ENCODE measurements at regions of chr5 and their contacts with region 1.

Region 1: GRCh38 chr5:159178978-159179377 is 30.4 kb downstream of the RNF145 start:
- DNase-seq: no peak
- H3K4me3 Mint-ChIP-seq: peak overlapping the region; percentile 68
- H3K27ac Mint-ChIP-seq: peak overlapping the region; percentile 94
- H3K4me1 Mint-ChIP-seq: peaks cover 60% of the 10 kb centered on the region
- H3K27me3 Mint-ChIP-seq: no peaks in the 10 kb centered on the region

Region 2: DNA sequence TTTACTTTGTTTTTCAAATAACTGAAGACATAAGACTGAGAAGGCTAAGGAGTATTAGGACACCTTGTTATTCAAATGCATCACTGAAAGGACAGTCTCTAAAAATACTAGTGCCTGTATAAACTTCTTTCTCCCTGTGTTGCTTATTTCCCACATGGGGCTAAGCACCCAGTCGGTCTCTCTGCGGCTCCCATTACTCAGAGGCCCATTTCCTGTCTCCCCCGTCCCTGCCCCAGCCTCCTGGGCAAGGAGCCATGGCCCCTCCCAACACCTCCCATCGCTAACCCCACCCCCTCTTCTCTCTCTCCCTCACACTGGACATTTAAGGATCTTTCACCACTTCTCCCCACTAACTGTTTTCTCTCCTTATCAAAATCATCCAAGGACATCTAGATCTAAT is 161.2 kb before region 1 on chr5:
- intact Hi-C with region 1: no loop called
- DNase-seq: no peak
- H3K4me3 Mint-ChIP-seq: no peak overlapping the region
- H3K27ac Mint-ChIP-seq: no peak overlapping the region
- H3K4me1 Mint-ChIP-seq: peaks cover 2% of the 10 kb centered on the region
- H3K27me3 Mint-ChIP-seq: peaks cover 3% of the 10 kb centered on the region

Region 3: DNA sequence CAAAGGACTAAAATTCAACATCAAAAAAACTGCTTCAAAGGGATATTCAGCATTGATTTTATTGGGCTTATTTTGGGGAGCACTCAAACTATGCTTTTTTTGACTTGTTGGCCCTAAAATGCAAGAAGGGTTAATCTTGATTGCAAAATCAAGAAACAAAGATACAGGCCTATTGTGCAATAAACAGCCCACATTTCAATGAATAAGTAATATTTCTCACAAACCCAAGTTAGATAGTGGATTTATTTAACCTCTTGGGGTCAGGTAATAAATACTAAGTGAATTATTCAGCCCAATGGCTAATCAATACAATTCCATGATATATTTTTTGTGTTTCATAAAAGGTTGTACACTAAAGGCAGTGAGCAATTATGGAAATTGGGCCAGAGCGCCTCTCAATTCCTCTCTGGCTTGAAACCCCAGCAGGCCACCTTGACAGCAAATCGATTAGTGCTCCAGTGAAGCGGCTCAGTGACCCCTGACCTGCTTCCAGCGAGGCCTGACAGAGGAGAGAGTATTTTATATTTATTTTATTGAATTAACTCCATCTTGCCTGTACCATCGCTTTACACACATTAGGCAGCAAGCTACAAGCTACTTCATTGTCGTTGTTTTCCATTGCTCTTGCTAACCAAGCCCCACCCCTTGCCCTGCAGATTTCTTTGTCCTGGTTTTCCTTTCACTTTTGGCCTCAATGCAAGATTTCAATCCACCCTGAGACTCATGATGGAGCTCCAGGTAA is 144.7 kb before region 1 on chr5:
- intact Hi-C with region 1: no loop called
- DNase-seq: no peak
- H3K4me3 Mint-ChIP-seq: no peak overlapping the region
- H3K27ac Mint-ChIP-seq: no peak overlapping the region
- H3K4me1 Mint-ChIP-seq: no peaks in the 10 kb centered on the region
- H3K27me3 Mint-ChIP-seq: peaks cover 14% of the 10 kb centered on the region

Region 4: DNA sequence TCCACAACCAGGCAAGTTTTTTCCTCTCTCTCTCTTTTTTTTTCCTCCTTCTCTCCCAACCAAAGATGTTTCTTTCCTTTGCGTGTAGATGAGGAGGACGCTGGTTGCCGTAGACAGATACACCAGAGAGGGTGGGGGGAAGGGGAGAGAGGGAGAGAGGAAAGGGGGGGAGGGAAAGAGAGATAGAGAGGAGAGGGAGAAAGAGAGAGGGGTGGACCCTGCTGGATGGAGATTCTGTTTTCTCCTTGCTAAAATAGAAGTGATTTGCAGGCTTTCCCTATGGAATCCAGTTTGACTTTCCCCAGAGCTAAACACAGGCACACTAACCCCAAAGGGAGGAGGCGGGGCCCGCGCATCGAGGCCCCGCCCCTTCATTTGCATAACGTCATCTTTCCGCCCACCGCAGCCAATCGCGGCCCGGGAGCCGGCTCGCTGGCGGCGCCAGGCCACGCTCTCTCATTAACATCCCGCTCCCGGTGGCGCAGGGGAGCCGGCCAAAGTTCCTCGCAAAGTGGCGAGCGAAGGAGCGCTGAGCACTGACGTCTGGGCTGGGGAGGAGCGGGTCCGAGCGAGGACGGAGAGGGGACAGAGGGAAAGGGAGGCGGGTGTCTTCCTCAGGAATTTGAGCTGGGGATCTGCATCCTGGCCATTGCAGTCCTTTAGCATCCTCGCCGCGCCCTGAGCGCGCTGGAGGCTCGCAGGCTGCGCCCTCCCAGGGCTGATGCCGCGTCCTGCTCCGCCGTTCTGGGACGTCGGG is 78.8 kb before region 1 on chr5:
- intact Hi-C with region 1: no loop called
- DNase-seq: peak; percentile 96
- H3K4me3 Mint-ChIP-seq: peak overlapping the region; percentile 85
- H3K27ac Mint-ChIP-seq: peak overlapping the region; percentile 64
- H3K4me1 Mint-ChIP-seq: peaks cover 34% of the 10 kb centered on the region
- H3K27me3 Mint-ChIP-seq: peaks cover 83% of the 10 kb centered on the region

Region 5: DNA sequence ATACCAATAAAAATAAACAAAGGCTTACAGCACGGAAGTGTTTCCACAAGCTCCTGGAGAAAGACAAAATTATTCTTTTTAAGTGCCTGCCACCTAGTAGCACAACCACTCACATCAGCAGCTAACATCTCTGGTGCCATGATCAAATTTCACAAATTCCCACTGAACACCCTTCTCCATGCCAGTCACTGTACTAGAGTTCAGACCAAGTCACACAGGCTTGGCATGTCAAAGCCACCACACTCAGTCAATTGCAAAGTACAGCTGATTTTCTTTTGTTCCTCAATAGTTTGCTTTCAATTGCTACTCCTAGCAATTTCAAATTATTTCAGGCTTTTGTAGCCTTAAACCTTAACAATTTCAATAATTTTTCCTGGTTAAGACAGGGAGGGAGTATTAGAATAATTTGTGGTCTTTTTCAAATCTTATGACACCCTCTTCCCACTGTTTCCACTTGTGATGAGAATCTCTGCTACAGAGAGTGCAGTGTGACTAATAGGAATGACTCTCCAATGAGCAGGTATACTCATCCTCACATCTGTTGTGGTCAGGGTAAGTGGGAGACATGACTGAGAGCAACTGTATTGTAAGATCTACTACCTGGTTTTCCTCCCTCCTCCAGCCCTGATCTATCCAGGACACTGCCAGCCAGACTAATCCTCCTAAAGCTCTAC is 15.8 kb before region 1 on chr5:
- intact Hi-C with region 1: loop called (anchors 1 kb)
- DNase-seq: no peak
- H3K4me3 Mint-ChIP-seq: peak overlapping the region; percentile 6
- H3K27ac Mint-ChIP-seq: peak overlapping the region; percentile 74
- H3K4me1 Mint-ChIP-seq: peaks cover 43% of the 10 kb centered on the region
- H3K27me3 Mint-ChIP-seq: no peaks in the 10 kb centered on the region

Region 6: GRCh38 chr5:159198063-159199036 is 19.4 kb after region 1 on chr5:
- intact Hi-C with region 1: no loop called
- DNase-seq: no peak
- H3K4me3 Mint-ChIP-seq: peak overlapping the region; percentile 3
- H3K27ac Mint-ChIP-seq: peak overlapping the region; percentile 83
- H3K4me1 Mint-ChIP-seq: peaks cover 51% of the 10 kb centered on the region
- H3K27me3 Mint-ChIP-seq: no peaks in the 10 kb centered on the region

Region 7: DNA sequence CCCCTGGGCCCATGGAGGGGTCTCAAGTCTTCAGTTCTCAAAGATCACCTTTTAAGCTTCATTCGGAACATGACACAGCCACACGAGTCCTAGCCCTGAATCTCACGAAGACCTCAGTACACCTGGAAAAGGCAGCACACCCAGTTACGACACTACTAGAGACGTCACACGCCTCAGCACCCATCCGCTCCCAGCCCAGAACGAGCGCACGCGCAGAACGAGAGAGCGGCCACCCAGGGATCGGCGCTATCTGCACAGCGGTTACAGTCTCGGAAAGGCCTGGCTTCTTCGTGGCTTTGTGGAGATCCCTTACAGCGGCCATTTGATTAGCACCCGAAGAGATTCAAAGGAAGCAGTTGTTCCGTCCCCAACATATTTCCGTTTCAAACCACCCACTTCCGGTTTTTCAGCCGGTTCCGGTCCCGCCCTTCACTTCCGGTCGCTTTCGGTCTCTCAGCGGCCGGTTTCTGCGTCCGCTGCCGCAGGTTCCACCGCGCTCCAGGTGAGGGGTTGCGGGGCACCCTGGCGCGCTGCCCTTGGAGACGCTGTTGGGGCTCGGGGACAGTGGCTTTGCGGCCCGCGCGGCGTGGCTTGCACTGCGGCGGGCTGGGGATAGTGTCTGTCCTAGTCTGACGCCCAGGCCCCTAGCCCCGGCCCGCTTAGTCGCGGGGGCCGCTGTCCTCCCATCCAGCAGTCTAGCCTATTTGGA is 84.0 kb after region 1 on chr5 and contains the start of gene UBLCP1:
- intact Hi-C with region 1: loop called (anchors 2 kb)
- DNase-seq: peak; percentile 92
- H3K4me3 Mint-ChIP-seq: peak within 1 kb of the TSS; percentile 92
- H3K27ac Mint-ChIP-seq: peak within 1 kb of the TSS; percentile 97
- H3K4me1 Mint-ChIP-seq: peaks cover 24% of the 10 kb centered on the region
- H3K27me3 Mint-ChIP-seq: peaks cover 3% of the 10 kb centered on the region
- total RNA-seq, gene UBLCP1: 30.2 and 31.2 TPM in 2 replicates